GM13976 (cell line): ENCODE measurements at regions of chr1 and their contacts with region 1.

Region 1: GRCh38 chr1:177780096-177780700 is 189.7 kb downstream of the SEC16B start:
- DNase-seq: peak; percentile 28
- CTCF ChIP-seq: peak; percentile 22

Region 2: DNA sequence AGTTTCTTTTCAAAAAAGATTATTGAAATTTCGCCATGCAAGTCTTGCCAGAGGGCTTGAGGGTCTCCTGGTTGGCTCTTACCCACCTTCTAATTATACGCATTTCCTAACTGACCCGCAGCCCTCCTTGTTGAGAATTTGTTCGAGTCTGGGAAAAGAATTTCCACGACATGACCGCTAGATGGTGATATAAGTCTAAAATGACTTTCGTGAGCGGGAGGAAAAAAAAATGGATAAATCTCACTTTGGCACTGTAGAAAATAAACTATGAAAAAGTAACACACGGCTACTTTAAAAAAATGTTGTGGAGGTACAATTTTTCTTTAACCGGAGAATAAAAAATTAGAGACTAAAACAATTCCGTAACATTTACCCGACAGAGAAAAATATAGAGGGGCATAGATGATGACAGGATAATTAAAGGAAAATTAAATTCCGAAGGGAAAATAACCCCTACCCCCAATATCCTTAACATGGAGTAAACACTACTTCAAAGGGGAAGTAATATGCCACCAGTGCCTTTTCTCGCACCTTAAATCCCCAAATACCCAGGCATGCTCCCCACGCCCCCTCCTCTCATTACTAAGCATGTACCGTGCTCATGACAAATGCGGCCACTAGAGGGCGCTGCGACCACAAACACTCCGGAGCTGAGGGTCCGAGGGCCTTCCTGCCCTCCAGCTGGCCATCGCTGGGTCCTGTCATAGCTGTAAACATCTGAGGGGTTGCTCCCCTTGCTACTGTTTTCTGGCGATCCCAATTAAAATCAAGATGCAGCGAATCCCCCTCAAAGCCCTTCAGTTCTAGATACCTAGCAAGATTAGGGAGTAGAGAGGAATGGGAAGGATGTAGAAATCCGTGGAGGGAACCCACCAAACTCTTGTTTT is 882.6 kb before region 1 on chr1:
- in situ Hi-C with region 1: loop called (anchors 25 kb)
- DNase-seq: peak; percentile 66
- CTCF ChIP-seq: peak; percentile 70